Activated CD4-positive, alpha-beta T cell treated with anti-CD3 and anti-CD28 coated beads, Interleukin-2, amount 10 ng/mL, durations not matched to agents 7 days and 5 days (primary cell): ENCODE measurements at regions of chr17 and their contacts with region 1.

Region 1: GRCh38 chr17:50139950-50140871 is 10.3 kb upstream of the SAMD14 start:
- DNase-seq: peak; percentile 85
- H3K4me3 Mint-ChIP-seq: peak overlapping the region; percentile 60
- H3K27ac Mint-ChIP-seq: peak overlapping the region; percentile 85
- H3K4me1 Mint-ChIP-seq: peaks cover 67% of the 10 kb centered on the region
- H3K27me3 Mint-ChIP-seq: no peaks in the 10 kb centered on the region

Region 2: DNA sequence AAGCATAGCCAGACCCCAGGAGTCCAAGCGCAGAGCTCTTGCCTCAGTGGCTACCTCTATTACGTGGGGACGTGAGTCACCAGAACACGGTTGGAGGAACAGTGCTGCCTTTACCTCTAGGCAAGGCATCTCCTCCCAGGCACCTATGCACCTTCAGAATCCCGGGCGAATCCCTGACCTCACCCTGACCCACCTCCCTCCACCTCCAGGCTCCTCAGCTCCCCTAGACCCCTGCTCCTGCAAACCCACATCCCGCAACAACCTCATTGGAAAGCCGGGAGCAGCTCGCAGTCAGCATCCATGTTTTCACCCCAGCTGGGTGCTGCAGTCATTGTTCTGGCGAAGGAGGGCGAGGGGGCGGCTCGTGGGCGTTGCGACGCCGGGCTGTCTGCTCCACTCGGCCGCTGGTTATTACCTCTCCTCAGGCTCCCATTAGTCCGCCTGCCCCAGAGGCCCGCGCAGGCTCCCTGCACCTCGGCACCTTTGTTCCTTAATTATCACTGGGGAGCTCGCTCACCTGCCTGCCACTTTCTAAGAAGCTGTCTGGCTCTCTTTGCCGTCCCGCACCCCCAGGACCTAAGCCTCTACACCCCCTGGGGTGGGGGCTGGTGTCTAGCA is 195.8 kb before region 1 on chr17:
- CTCF ChIA-PET with region 1: no interaction called
- POLR2A ChIA-PET with region 1: no interaction called
- DNase-seq: no peak
- H3K4me3 Mint-ChIP-seq: no peak overlapping the region
- H3K27ac Mint-ChIP-seq: no peak overlapping the region
- H3K4me1 Mint-ChIP-seq: no peaks in the 10 kb centered on the region
- H3K27me3 Mint-ChIP-seq: peaks cover 14% of the 10 kb centered on the region

Region 3: GRCh38 chr17:50003911-50004310 is 136.3 kb before region 1 on chr17:
- CTCF ChIA-PET with region 1: no interaction called
- POLR2A ChIA-PET with region 1: no interaction called
- DNase-seq: no peak
- H3K4me3 Mint-ChIP-seq: no peak overlapping the region
- H3K27ac Mint-ChIP-seq: no peak overlapping the region
- H3K4me1 Mint-ChIP-seq: no peaks in the 10 kb centered on the region
- H3K27me3 Mint-ChIP-seq: peaks cover 56% of the 10 kb centered on the region

Region 4: DNA sequence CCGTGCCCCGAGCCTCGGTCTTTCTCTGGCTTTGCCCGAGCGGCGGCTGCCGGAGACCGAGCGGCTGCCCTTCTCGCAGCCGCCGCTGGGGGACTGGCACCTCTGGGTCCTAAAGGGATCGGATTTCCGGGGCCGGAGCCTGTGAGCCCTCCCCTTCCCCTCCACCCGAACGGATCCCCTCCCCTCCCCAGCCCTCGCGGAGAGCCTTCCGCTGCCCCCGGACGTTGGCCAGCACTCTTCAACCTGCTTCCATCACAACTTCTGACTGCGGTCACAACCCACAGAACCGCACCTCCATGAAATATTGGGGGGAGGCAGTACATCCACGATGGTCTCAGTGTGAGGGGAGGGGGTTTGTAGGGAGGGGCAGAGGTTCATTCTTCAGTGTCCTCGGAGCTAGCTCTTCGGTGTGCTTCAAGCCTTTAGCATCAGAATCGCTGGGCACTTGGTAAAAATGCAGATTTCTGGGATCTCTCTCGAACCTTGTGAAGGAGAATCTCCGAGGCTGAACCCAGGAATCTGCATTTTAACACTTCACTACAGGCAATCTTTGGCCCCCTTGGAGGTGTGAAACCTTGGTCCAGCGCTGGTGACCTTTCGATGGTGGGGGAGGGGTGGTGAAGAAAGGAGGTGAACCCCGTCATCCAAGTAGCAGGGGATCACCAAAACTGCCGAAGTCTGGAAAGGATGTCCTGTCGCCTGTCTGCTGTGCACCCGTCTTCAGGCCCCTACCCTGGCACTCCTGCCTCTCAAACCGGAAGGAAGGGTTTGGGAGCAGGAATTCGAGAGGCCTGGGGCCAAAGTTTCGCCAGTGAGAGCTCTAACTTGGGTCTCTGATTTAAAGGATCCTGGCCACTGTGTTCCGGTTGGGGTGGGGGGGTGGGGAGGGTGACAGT is 11.1 kb after region 1 on chr17:
- CTCF ChIA-PET with region 1: interaction called, 40 read pairs
- POLR2A ChIA-PET with region 1: no interaction called
- DNase-seq: peak; percentile 92
- H3K4me3 Mint-ChIP-seq: peak overlapping the region; percentile 89
- H3K27ac Mint-ChIP-seq: peak overlapping the region; percentile 95
- H3K4me1 Mint-ChIP-seq: peaks cover 50% of the 10 kb centered on the region
- H3K27me3 Mint-ChIP-seq: no peaks in the 10 kb centered on the region

Region 5: DNA sequence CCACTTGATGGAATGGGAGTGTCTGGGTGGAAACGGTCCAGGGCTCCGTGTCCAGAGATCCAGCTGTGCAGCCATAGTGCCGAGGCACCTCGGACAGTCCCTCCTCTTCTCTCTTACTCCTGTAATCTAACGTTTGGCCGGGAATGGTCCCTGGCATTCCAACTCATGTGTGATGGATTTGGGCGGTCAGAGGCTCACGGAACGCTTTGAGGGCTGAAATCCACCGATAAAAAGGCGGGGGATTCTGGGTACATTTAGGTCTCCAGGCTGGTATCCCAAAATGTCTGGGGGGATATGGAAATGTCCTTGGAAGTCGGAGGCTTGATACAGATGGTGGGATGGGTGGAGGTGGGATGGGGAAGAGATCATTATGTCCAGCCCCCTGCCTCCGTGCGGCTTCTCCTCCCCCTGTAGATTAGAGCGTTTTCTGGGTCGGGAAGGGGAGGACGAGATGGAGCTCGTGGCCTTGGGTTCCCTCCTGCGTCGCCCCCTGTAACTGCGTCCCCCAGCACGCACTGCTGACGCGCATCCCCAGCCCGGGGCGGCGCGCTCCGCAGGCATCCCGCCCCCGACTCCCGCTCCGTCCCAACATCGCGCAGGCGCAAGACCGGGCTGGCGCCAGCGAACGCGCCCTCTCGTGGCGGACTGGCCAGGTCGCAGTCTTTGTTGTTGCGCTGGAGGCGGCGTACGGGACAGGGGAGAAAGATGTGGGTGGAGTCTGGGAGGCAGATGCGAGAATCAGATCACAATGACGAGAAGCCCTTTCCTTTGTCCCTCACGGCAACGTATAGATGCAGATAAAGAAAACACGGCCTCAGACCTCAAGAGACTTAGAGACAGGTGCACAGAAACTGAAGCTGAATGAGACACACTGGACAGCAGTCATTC is 21.1 kb after region 1 on chr17:
- CTCF ChIA-PET with region 1: interaction called, 18 read pairs
- POLR2A ChIA-PET with region 1: no interaction called
- DNase-seq: peak; percentile 95
- H3K4me3 Mint-ChIP-seq: peak overlapping the region; percentile 64
- H3K27ac Mint-ChIP-seq: peak overlapping the region; percentile 89
- H3K4me1 Mint-ChIP-seq: peaks cover 41% of the 10 kb centered on the region
- H3K27me3 Mint-ChIP-seq: peaks cover 4% of the 10 kb centered on the region